Calu3 (cell line): ENCODE measurements at regions of chr16 and their contacts with region 1.

Region 1: DNA sequence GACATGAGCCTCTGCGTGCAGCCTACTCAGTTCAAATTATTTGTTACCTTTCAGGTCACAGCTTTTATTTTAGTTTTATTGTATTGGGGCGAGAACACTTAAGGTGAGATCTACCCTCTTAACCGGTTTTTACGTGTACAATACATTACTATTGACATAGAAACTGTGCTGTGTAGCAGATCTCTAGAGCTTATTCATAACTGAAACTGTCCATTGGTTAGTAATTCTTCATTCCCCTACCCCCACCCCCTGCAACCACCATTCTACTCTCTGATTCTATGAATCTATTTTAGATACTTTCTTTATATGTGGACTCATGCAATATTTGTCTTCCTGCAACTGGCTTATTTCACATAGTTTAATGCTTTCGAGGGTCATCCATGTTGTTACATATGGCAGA is 43.5 kb downstream of the KNOP1 start:
- DNase-seq: no peak
- H3K4me3 Mint-ChIP-seq: no peak overlapping the region
- H3K27ac Mint-ChIP-seq: no peak overlapping the region
- H3K4me1 Mint-ChIP-seq: no peaks in the 10 kb centered on the region
- H3K27me3 Mint-ChIP-seq: no peaks in the 10 kb centered on the region
- CTCF ChIP-seq: no peak

Region 2: DNA sequence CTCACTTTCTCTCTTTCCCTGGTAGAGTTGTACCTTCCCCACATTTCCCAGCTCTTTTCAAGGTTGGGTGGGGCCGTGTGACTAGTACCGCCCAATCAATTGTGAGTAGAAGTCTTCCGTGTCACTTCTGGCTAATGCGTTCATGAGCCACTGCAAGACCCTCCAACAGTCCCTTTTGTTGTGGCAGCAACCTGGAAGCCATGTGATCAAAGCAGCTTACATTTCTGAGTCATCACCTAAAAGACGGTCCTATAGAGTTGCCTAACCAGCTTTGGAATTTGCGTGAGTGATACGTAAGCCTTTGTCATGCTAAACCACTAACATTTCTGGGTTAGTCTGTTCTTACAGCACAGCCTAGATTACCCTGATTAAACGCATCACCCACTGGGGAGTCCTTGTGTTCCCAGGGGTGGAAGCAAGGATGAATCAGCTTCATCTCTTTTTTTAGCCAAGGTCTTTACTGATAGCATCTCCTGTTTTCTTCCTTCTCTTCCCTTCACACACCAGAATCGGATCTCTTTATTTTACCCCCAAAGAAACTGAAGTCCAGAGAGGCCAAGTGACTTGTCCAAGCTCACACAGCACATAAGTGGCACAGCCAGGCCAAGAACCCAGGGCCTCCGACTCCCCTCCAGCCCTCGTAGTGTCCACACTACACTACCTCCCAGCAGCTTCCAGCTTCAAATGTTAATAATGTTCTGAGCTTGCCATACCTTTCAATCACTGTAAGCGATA is 1837.5 kb before region 1 on chr16:
- CTCF ChIA-PET with region 1: interaction called, 12 read pairs
- intact Hi-C with region 1: no loop called
- DNase-seq: no peak
- H3K4me3 Mint-ChIP-seq: no peak overlapping the region
- H3K27ac Mint-ChIP-seq: no peak overlapping the region
- H3K4me1 Mint-ChIP-seq: no peaks in the 10 kb centered on the region
- H3K27me3 Mint-ChIP-seq: no peaks in the 10 kb centered on the region
- CTCF ChIP-seq: no peak

Region 3: DNA sequence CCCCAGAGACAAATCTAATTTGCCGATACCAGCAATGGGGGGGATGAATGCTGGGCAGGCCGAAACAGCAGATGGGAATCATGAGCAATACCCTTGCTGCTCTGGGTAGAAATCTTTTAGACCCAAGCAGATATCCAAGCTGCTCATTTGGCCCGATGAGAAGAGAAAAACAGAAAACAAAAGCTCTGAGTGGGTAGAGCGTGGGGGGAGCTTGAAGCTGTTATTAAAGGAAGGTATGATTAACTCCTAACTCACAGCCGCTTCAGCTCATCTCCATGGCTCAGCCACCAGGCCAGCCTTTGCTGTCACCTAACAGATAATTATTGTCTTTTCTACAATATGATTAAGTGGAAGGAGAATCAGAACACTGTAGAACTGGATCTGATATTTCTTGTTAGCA is 60.7 kb before region 1 on chr16:
- CTCF ChIA-PET with region 1: no interaction called
- intact Hi-C with region 1: no loop called
- DNase-seq: no peak
- H3K4me3 Mint-ChIP-seq: no peak overlapping the region
- H3K27ac Mint-ChIP-seq: no peak overlapping the region
- H3K4me1 Mint-ChIP-seq: no peaks in the 10 kb centered on the region
- H3K27me3 Mint-ChIP-seq: no peaks in the 10 kb centered on the region
- CTCF ChIP-seq: no peak

Region 4: GRCh38 chr16:20114356-20114755 is 439.9 kb after region 1 on chr16:
- CTCF ChIA-PET with region 1: no interaction called
- intact Hi-C with region 1: no loop called
- DNase-seq: peak; percentile 63
- H3K4me3 Mint-ChIP-seq: no peak overlapping the region
- H3K27ac Mint-ChIP-seq: no peak overlapping the region
- H3K4me1 Mint-ChIP-seq: no peaks in the 10 kb centered on the region
- H3K27me3 Mint-ChIP-seq: peaks cover 44% of the 10 kb centered on the region
- CTCF ChIP-seq: no peak